Posterior vena cava (tissue), 2 donors: ENCODE measurements at regions of chr2 and their contacts with region 1.

Region 1: GRCh38 chr2:217713395-217714286 is 289.2 kb downstream of the TNS1 start:
- DNase-seq: peak; percentile 91

Region 2: GRCh38 chr2:216683846-216684507 is 1029.7 kb before region 1 on chr2:
- intact Hi-C with region 1: loop called in 1 of 2 experiments (anchors 5 kb)
- DNase-seq: peak; percentile 83

Region 3: GRCh38 chr2:217683106-217683870 is 30.4 kb before region 1 on chr2:
- intact Hi-C with region 1: no loop called
- DNase-seq: no peak